ENCODE measurements at regions of chr1 and their contacts with region 1.

Region 1: DNA sequence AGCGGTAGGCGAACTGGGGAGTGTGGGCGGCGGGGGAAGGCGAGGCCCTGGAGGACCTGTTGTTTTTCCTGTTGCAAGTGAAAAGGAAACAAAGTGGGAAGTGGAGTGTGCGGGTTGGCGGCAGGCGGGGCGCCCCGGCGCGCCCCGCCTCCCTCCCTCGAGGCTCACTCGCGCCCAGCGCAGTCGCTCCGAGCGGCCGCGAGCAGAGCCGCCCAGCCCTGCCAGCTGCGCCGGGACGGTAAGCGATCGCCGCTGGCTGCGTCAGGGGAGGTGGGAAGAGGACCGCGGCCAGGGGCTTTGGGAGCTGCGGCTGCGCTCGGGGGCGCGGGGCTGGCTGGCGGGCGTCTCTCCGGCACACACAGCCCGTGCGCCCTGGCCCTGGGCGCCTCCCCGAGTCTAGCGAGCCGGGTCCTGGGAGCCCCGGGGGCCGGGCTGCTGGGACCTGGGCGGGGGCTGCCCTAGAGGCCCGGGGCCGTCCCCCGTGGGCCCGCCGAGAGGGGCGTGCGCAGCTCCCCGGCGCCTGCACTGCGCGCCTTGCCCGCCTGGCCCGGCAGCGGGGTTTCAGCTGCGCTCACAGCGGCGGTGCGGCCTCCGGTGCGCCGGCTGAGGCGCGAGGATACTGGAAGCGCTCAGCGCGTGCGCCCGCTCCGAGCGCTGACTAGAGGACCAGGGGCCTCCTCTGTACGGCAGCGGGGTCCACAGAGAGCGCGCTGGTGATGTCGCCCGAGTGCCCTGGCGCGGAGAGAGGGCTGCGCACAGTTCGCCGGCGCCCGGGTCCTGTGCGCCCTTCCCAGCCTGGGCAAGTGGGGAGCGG is at the start of gene PIK3CD:
- DNase-seq: peak; percentile 68
- ATAC-seq: peak; percentile 22
- H3K4me3 ChIP-seq: peak within 1 kb of the TSS; percentile 57 to 96 (median 74)
- H3K4me3 Mint-ChIP-seq: peak within 1 kb of the TSS; percentile 98
- H3K27ac ChIP-seq: peak within 1 kb of the TSS; percentile 77 to 82
- H3K27ac Mint-ChIP-seq: peak within 1 kb of the TSS; percentile 99
- H3K4me1 ChIP-seq: peaks cover 39 to 57% of the 10 kb centered on the region in 2 donors
- H3K4me1 Mint-ChIP-seq: peaks cover 58% of the 10 kb centered on the region
- H3K27me3 ChIP-seq: no peaks in the 10 kb centered on the region
- H3K27me3 Mint-ChIP-seq: no peaks in the 10 kb centered on the region
- CTCF ChIP-seq: no peak
- total RNA-seq, gene PIK3CD: 222 and 223 TPM in 2 replicates

Region 2: GRCh38 chr1:9371391-9371935 is 280.3 kb before region 1 on chr1:
- CTCF ChIA-PET with region 1: no interaction called
- POLR2A ChIA-PET with region 1: no interaction called
- intact Hi-C with region 1: no loop called
- DNase-seq: no peak
- ATAC-seq: no peak
- H3K4me3 ChIP-seq: no peak overlapping the region
- H3K4me3 Mint-ChIP-seq: no peak overlapping the region
- H3K27ac ChIP-seq: no peak overlapping the region
- H3K27ac Mint-ChIP-seq: no peak overlapping the region
- H3K4me1 ChIP-seq: peaks cover 0 to 6% of the 10 kb centered on the region in 2 donors
- H3K4me1 Mint-ChIP-seq: peaks cover 3% of the 10 kb centered on the region
- H3K27me3 ChIP-seq: no peaks in the 10 kb centered on the region
- H3K27me3 Mint-ChIP-seq: no peaks in the 10 kb centered on the region
- CTCF ChIP-seq: no peak

Region 3: GRCh38 chr1:9615316-9616063 is 36.3 kb before region 1 on chr1:
- CTCF ChIA-PET with region 1: interaction called, 12 read pairs
- POLR2A ChIA-PET with region 1: interaction called, 7 read pairs
- intact Hi-C with region 1: loop called (anchors 5 kb)
- DNase-seq: peak; percentile 72
- ATAC-seq: peak; percentile 96
- H3K4me3 ChIP-seq: no peak overlapping the region
- H3K4me3 Mint-ChIP-seq: no peak overlapping the region
- H3K27ac ChIP-seq: no peak overlapping the region
- H3K27ac Mint-ChIP-seq: no peak overlapping the region
- H3K4me1 ChIP-seq: peaks cover 4 to 9% of the 10 kb centered on the region in 2 donors
- H3K4me1 Mint-ChIP-seq: peaks cover 2% of the 10 kb centered on the region
- H3K27me3 ChIP-seq: no peaks in the 10 kb centered on the region
- H3K27me3 Mint-ChIP-seq: peaks cover 3% of the 10 kb centered on the region
- CTCF ChIP-seq: peak; percentile 76

Region 4: DNA sequence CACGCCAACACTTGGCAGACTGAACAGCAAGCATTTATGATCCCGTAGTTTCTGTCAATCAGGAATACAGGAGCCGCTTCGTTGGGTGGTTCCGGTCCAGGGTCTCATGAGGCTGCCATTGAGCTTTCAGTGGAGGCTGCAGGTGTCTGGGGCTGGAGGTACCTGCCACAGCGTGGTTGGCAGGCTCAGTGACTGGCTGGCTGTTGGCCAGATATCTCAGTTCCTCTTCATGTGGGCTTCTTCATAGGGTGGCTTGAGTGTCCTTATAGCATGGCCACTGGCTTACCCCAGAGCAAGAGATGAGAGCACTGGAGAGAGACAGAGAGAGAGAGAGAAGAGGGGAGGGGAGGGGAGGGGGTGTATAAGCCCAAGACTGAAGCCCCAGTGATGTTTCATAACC is 29.1 kb after region 1 on chr1:
- CTCF ChIA-PET with region 1: interaction called, 6 read pairs
- POLR2A ChIA-PET with region 1: interaction called, 51 read pairs
- intact Hi-C with region 1: loop called (anchors 1 kb)
- DNase-seq: peak; percentile 53
- ATAC-seq: peak; percentile 66
- H3K4me3 ChIP-seq: no peak overlapping the region
- H3K4me3 Mint-ChIP-seq: peak overlapping the region; percentile 31
- H3K27ac ChIP-seq: peak overlapping the region; percentile 0 to 78
- H3K27ac Mint-ChIP-seq: peak overlapping the region; percentile 83
- H3K4me1 ChIP-seq: peaks cover 45 to 74% of the 10 kb centered on the region in 2 donors
- H3K4me1 Mint-ChIP-seq: peaks cover 54% of the 10 kb centered on the region
- H3K27me3 ChIP-seq: no peaks in the 10 kb centered on the region
- H3K27me3 Mint-ChIP-seq: no peaks in the 10 kb centered on the region
- CTCF ChIP-seq: no peak

Region 5: GRCh38 chr1:9705337-9706093 is 53.7 kb after region 1 on chr1:
- CTCF ChIA-PET with region 1: interaction called, 4 read pairs
- POLR2A ChIA-PET with region 1: interaction called, 11 read pairs
- intact Hi-C with region 1: no loop called
- DNase-seq: no peak
- ATAC-seq: no peak
- H3K4me3 ChIP-seq: no peak overlapping the region
- H3K4me3 Mint-ChIP-seq: no peak overlapping the region
- H3K27ac ChIP-seq: peak overlapping the region in 1 of 2 donors; percentile 7
- H3K27ac Mint-ChIP-seq: peak overlapping the region; percentile 27
- H3K4me1 ChIP-seq: peaks cover 38 to 50% of the 10 kb centered on the region in 2 donors
- H3K4me1 Mint-ChIP-seq: peaks cover 56% of the 10 kb centered on the region
- H3K27me3 ChIP-seq: no peaks in the 10 kb centered on the region
- H3K27me3 Mint-ChIP-seq: no peaks in the 10 kb centered on the region
- CTCF ChIP-seq: no peak

Region 6: GRCh38 chr1:9724706-9725476 is 73.1 kb after region 1 on chr1:
- CTCF ChIA-PET with region 1: interaction called, 29 read pairs
- POLR2A ChIA-PET with region 1: interaction called, 4 read pairs
- intact Hi-C with region 1: no loop called
- DNase-seq: peak; percentile 79
- ATAC-seq: peak; percentile 77
- H3K4me3 ChIP-seq: no peak overlapping the region
- H3K4me3 Mint-ChIP-seq: no peak overlapping the region
- H3K27ac ChIP-seq: peak overlapping the region in 1 of 2 donors; percentile 18
- H3K27ac Mint-ChIP-seq: peak overlapping the region; percentile 77
- H3K4me1 ChIP-seq: peaks cover 8 to 26% of the 10 kb centered on the region in 2 donors
- H3K4me1 Mint-ChIP-seq: peaks cover 17% of the 10 kb centered on the region
- H3K27me3 ChIP-seq: no peaks in the 10 kb centered on the region
- H3K27me3 Mint-ChIP-seq: no peaks in the 10 kb centered on the region
- CTCF ChIP-seq: peak; percentile 88

Region 7: GRCh38 chr1:11078631-11079030 is 1426.9 kb after region 1 on chr1:
- CTCF ChIA-PET with region 1: no interaction called
- POLR2A ChIA-PET with region 1: no interaction called
- intact Hi-C with region 1: no loop called
- DNase-seq: no peak
- ATAC-seq: no peak
- H3K4me3 ChIP-seq: no peak overlapping the region
- H3K4me3 Mint-ChIP-seq: no peak overlapping the region
- H3K27ac ChIP-seq: no peak overlapping the region
- H3K27ac Mint-ChIP-seq: no peak overlapping the region
- H3K4me1 ChIP-seq: no peaks in the 10 kb centered on the region
- H3K4me1 Mint-ChIP-seq: no peaks in the 10 kb centered on the region
- H3K27me3 ChIP-seq: no peaks in the 10 kb centered on the region
- H3K27me3 Mint-ChIP-seq: no peaks in the 10 kb centered on the region
- CTCF ChIP-seq: no peak